ENCODE measurements at regions of chr16 and their contacts with region 1.

Region 1: GRCh38 chr16:1474796-1475551 is at the start of gene CLCN7:
- DNase-seq: peak; percentile 86 to 91
- ATAC-seq: peak; percentile 93 to 97
- H3K4me3 ChIP-seq: peak within 1 kb of the TSS; percentile 80 to 100 (median 86)
- H3K27ac ChIP-seq: peak within 1 kb of the TSS; percentile 90 to 98 (median 94)
- H3K4me1 ChIP-seq: peaks cover 14 to 27% of the 10 kb centered on the region in 2 donors
- H3K27me3 ChIP-seq: no peaks in the 10 kb centered on the region
- CTCF ChIP-seq: peak in 2 of 5 experiments; percentile 21 to 56
- POLR2A ChIP-seq: peak; percentile 95 to 97
- total RNA-seq, gene CLCN7: 24.8 to 45.8 (median 38.4) TPM

Region 2: DNA sequence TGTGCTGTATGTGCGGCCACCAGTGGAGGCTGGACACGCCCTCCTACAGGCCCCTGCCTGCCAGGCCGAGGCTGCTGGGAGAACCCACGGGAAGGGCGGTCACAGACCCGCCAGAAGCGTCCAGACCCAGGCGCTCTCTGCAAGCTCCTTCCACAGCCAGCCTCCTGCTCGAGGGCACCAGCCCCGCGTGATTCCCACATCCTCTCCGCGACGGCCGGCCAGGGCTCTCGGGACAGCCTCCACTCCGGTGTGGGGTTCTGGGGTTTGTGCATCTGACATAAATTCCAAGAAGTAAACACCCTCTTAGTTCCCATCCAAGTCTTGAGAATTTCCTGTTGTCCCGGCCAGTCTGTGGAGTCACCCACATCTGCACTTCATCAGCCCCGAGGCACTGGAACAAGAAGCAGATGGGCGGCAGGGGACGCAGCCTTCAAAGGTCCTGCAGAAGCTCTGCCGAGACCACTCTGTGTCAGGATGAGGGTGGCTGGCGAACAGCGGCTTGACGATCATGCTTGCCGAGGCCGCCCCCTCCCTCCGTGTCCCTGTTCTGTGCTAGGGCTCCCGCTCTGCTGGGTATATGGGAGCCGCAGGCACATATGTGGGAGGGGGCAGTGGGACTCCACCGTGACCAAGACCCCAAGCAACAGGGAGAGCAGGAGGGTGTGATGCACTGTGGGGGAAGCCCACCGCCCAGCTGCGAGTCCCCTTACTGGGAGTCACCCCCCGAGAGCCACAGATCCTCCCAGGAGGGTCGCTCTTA is 56.1 kb after region 1 on chr16:
- in situ Hi-C with region 1: no loop called
- intact Hi-C with region 1: loop called (anchors 1 kb)
- DNase-seq: peak; percentile 29 to 57
- ATAC-seq: peak; percentile 17 to 18
- H3K4me3 ChIP-seq: peak overlapping the region; percentile 31 to 74 (median 61)
- H3K27ac ChIP-seq: peak overlapping the region; percentile 86 to 94 (median 89)
- H3K4me1 ChIP-seq: peaks cover 15 to 21% of the 10 kb centered on the region in 2 donors
- H3K27me3 ChIP-seq: no peaks in the 10 kb centered on the region
- CTCF ChIP-seq: no peak
- POLR2A ChIP-seq: peak in 1 of 2 donors; percentile 51

Region 3: DNA sequence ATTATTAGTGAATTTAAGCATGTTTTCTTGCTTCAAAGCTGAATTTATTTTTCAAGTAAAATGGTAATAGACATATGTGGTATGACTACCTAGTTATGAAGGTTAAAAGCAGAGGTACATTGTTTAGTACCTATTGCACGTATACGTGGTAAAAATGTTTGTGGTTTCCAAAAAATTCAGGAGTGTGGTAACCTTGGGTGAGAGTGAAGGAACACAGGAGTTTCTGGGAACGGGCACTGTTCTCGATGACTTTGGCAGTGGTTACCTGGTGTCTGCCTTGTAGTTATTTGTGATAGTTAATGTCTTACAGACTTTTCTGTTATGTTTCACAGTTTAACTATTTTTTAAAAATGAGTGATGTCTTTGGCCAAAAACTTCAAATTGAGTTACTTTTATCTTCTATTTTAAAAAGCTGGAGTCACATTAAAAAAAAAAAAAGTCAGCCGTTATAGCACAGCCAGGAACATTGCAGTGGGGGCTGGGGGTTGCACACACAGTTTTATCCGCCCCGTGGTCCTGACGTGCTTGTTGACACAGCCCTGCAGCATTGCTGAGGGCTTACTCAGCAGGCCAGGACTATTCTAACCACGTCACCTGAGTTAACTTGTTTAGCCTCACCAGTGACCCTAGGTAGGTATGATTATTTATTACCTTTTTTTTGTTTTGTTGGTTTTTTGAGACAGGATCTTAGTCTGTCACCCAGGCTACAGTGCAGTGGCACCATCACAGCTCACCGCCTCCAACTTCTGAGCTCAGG is 214.0 kb after region 1 on chr16:
- in situ Hi-C with region 1: no loop called
- intact Hi-C with region 1: loop called (anchors 10 kb)
- DNase-seq: no peak
- ATAC-seq: no peak
- H3K4me3 ChIP-seq: no peak overlapping the region
- H3K27ac ChIP-seq: no peak overlapping the region
- H3K4me1 ChIP-seq: no peaks in the 10 kb centered on the region
- H3K27me3 ChIP-seq: no peaks in the 10 kb centered on the region
- CTCF ChIP-seq: no peak
- POLR2A ChIP-seq: no peak